ENCODE measurements at regions of chr12 and their contacts with region 1.

Region 1: GRCh38 chr12:110093631-110094311 is 30.4 kb upstream of the IFT81 start:
- DNase-seq: no peak
- H3K4me3 ChIP-seq: no peak overlapping the region
- H3K27ac ChIP-seq: no peak overlapping the region
- H3K4me1 ChIP-seq: no peaks in the 10 kb centered on the region
- H3K27me3 ChIP-seq: no peaks in the 10 kb centered on the region
- CTCF ChIP-seq: no peak
- POLR2A ChIP-seq: no peak

Region 2: GRCh38 chr12:109239179-109239578 is 854.6 kb before region 1 on chr12:
- intact Hi-C with region 1: no loop called
- DNase-seq: no peak
- H3K4me3 ChIP-seq: no peak overlapping the region
- H3K27ac ChIP-seq: no peak overlapping the region
- H3K4me1 ChIP-seq: no peaks in the 10 kb centered on the region
- H3K27me3 ChIP-seq: no peaks in the 10 kb centered on the region
- CTCF ChIP-seq: no peak
- POLR2A ChIP-seq: no peak

Region 3: DNA sequence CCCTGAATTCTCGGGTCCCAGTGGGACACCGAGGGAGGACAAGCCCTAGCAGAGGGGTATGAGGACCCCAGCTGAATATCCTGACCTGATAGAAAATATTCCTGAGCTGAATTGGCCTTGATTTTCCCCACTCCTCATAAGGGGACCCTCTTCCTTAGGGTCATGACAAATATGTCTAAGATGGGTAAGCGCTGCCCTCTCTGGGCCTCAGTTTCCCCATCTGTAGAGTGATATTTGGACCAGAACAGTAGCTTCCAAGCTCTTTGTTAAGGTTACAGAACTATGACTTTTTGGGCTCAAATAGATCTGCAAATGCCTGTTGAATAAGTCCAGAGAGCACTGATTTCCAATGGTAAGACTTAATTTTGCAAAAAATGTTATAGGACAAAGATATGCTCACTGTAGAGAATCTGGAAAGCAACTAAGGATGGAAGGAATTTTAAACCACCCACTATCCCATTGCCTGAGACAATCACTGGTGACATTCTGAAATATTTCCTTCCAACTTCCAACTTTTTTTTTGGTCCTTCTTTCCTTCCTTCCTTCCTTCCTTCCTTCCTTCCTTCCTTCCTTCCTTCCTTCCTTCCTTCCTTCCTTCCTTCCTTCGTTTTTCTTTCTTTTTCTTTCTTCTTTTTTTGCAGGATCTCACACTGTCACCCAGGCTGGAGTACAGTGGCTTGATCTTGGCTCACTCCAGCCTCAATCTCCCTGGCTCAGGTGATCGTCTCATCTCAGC is 794.7 kb after region 1 on chr12:
- intact Hi-C with region 1: loop called (anchors 10 kb)
- DNase-seq: no peak
- H3K4me3 ChIP-seq: peak overlapping the region in 6 of 8 donors; percentile 38 to 67 (median 46)
- H3K27ac ChIP-seq: peak overlapping the region in 1 of 8 donors; percentile 47
- H3K4me1 ChIP-seq: peaks cover 0 to 18% (median 9%) of the 10 kb centered on the region in 6 donors
- H3K27me3 ChIP-seq: no peaks in the 10 kb centered on the region
- CTCF ChIP-seq: peak in 5 of 11 experiments; percentile 12 to 70 (median 62)
- POLR2A ChIP-seq: no peak

Measured in spleen (tissue), 13 donors.